Activated T-helper 1 cell treated with anti-CD3 and anti-CD28 coated beads, Interleukin-12 subunit alpha, Interleukin-12 subunit beta, Interleukin-2, Interleukin-4 antibody, amounts not matched to agents 30 ng/mL and 10 ng/mL and 1 ng/mL, durations not matched to agents 14 hours and 24 hours and 36 hours (primary cell): ENCODE measurements at regions of chr1 and their contacts with region 1.

Region 1: DNA sequence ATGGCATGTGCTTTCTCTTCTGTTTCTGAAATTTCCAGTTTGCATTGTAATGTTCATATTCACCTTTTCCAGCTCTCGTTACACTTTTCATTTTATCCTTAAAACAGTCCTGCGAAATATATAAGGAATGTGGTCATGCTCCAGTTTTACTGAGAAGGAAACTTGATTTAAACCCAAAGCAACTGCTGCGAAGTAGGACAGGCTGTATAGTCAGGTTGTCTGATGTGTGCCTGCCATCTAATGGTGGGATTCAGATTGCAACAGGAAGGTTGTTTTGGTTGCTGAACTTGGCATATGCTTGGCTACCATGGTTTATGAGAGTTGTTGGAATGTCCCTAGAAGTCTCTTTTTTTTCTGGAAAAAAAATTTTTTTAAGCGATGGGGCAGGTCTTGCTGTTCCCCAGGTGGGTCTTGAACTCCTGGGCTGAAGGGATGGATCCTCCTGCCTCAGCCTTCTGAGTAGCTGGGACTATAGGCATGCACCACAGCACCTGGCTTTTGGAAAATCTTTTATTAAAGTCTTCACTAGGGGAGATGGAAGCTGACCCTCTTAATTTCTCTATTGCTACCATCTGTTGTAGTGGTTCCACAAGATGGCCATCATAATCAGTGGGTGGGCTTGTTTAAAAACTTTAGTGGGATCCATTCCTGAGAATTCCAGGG is 86.9 kb downstream of the UCK2 start:
- DNase-seq: peak; percentile 52
- H3K4me3 Mint-ChIP-seq: no peak overlapping the region
- H3K27ac Mint-ChIP-seq: no peak overlapping the region
- H3K4me1 Mint-ChIP-seq: no peaks in the 10 kb centered on the region
- H3K27me3 Mint-ChIP-seq: no peaks in the 10 kb centered on the region

Region 2: GRCh38 chr1:165392634-165393571 is 521.4 kb before region 1 on chr1:
- intact Hi-C with region 1: loop called (anchors 2 kb)
- DNase-seq: peak; percentile 90
- H3K4me3 Mint-ChIP-seq: peak overlapping the region; percentile 58
- H3K27ac Mint-ChIP-seq: peak overlapping the region; percentile 92
- H3K4me1 Mint-ChIP-seq: peaks cover 25% of the 10 kb centered on the region
- H3K27me3 Mint-ChIP-seq: peaks cover 80% of the 10 kb centered on the region

Region 3: DNA sequence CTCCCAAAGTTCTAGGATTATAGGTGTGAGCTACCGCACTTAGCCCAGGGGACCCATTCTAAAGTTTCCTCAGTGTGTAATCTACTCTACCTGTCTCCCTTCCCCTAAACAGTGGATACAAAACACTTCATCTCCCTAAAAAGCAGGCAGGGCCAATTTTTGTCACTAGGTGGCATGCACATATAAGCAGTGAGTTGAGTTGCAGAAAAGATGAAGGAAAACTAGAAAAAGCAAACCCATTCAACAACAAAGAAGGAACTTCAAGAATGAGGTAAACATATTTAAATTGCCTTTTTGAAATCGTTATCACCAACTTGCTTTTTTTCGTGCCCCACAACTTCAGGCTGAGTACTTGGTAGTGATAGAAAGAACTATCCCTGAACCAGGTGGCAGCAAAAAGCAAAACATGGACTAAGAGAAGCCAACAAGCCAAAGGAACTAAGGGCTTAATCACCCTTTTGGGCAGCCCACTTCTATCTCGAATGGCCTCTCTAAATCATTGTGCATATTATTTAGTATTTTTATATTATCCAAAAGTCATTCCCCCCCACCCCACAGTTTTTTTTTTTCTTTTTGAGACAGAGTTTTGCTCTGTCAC is 196.2 kb before region 1 on chr1:
- intact Hi-C with region 1: loop called (anchors 1 kb)
- DNase-seq: peak; percentile 16
- H3K4me3 Mint-ChIP-seq: no peak overlapping the region
- H3K27ac Mint-ChIP-seq: no peak overlapping the region
- H3K4me1 Mint-ChIP-seq: no peaks in the 10 kb centered on the region
- H3K27me3 Mint-ChIP-seq: peaks cover 6% of the 10 kb centered on the region

Region 4: GRCh38 chr1:165768513-165769394 is 145.5 kb before region 1 on chr1 and contains the start of gene TMCO1:
- intact Hi-C with region 1: loop called (anchors 1 kb)
- DNase-seq: peak; percentile 94
- H3K4me3 Mint-ChIP-seq: peak within 1 kb of the TSS; percentile 99
- H3K27ac Mint-ChIP-seq: peak within 1 kb of the TSS; percentile 100
- H3K4me1 Mint-ChIP-seq: peaks cover 53% of the 10 kb centered on the region
- H3K27me3 Mint-ChIP-seq: no peaks in the 10 kb centered on the region
- total RNA-seq, gene TMCO1: 97.1 and 102 TPM in 2 replicates

Region 5: DNA sequence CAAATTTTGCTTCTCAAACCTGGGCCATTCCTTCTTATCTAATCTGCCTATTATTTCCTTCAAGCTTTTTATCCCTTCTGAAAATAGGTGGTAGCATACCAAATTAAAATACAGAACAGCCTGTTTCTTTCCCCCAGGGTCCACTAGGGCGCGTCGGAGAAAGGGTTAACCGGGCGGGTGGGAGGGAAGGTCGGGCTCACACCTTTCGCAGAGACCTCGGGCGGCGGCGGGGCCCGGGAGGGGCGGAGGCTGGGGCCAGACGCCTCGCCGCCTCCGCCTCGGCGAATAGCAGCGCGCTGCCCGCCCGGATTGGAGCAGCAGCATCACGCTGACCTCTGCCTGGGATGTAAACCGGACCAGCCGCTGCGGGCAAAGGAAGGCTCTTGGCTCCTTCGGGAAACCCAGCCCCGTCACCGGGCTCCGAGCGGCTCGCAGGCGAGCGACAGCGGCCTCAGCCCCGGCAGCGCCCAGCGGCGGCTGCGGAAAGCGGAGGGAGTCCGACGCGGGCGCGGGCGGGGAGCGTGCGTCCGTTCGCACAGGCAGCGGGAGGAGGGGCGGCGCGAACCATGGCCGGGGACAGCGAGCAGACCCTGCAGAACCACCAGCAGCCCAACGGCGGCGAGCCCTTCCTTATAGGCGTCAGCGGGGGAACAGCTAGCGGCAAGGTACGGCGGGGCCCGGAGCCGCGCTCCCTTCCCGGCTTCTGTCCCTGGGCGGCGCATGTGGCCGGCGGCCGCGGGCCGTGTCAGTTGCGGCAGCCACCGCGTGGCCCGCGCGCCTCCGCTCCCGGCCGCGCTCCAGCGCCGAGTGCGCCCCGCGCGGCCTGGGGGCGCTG is 86.8 kb before region 1 on chr1 and contains the start of gene UCK2:
- intact Hi-C with region 1: loop called (anchors 1 kb)
- DNase-seq: peak; percentile 51
- H3K4me3 Mint-ChIP-seq: peak within 1 kb of the TSS; percentile 96
- H3K27ac Mint-ChIP-seq: peak within 1 kb of the TSS; percentile 90
- H3K4me1 Mint-ChIP-seq: peaks cover 22% of the 10 kb centered on the region
- H3K27me3 Mint-ChIP-seq: peaks cover 15% of the 10 kb centered on the region
- total RNA-seq, gene UCK2: 109 and 112 TPM in 2 replicates

Region 6: GRCh38 chr1:165871311-165872067 is 42.8 kb before region 1 on chr1:
- intact Hi-C with region 1: loop called (anchors 5 kb)
- DNase-seq: peak; percentile 49
- H3K4me3 Mint-ChIP-seq: peak overlapping the region; percentile 55
- H3K27ac Mint-ChIP-seq: peak overlapping the region; percentile 63
- H3K4me1 Mint-ChIP-seq: peaks cover 54% of the 10 kb centered on the region
- H3K27me3 Mint-ChIP-seq: peaks cover 5% of the 10 kb centered on the region